Activated B cell treated with CpG ODN at 0.5 μM for 24 hours (primary cell): ENCODE measurements at regions of chr7 and their contacts with region 1.

Region 1: DNA sequence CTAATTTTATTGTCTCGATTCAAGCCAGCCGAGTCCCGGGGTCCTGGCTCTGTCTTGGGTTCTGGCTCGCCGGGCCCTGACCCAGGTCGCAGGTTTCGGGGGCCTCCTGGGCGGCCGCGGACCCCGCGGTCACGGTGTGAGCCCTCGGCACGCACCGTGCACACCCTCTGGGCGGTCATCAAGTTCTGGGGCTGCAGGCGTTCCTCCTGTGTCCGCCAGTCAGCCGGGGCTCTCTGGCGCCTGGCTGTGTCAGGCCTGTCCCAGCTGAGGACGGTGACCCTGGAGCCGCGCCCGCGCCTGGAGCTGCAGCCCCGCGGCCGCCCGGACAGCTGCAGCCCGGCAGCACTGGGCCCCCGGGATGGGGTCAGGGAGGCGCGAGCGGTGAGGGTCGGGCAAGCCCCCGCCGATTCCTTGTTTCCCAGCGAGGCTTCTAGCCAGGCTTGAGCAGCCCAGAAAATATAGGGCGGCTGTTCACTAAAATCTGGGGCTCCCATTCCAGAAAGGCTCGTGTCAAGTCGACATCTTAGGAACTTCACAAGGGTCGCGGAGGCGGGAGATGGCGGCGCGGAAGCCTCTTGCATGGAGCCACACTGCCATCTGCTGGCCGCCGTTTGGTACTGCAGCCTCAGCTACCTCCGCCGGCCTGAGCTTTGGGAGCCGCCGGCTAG is 4.2 kb upstream of the HOXA7 start:
- DNase-seq: peak; percentile 83
- ATAC-seq: peak; percentile 87
- H3K4me3 Mint-ChIP-seq: peak overlapping the region; percentile 75
- H3K27ac Mint-ChIP-seq: no peak overlapping the region
- H3K4me1 Mint-ChIP-seq: peaks cover 31% of the 10 kb centered on the region
- H3K27me3 Mint-ChIP-seq: peaks cover 72% of the 10 kb centered on the region
- CTCF ChIP-seq: peak; percentile 97

Region 2: DNA sequence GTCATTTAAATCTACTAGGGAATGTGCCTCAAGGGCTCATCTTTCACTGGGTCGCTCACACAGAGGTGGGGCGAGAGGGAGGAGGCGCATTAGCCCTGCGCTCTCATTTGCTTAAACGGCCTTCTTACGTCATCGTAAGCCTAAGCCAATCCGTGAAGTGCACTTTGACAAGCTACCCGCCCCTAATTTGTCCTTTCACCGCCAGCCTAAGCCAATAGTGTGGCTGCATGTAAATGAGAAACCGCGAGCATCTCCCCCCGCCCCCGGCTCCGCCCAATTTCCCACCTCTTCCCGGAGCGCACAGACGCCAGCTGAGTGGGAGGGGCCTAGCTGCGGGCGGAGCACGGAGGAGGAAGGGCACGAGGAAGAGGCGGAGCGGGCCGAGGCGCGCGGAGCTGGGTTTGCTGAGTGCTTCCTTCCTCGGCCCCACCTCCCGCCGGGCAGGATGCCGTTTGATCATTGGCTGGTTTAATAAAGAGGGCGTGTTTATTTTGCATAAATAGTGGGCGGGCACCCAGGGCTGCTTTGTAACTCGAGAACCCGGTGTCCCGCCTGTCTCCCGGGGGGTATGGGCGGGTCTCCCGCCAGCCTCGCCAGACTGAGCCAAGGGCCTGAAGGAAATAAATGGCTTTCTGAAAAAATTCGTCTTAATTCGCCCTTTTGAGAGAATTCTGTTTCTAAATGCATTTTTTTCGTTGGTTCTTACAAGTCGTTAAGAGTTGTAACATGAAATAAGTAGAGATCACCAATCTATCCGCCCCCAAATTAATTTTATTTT is 1298.2 kb before region 1 on chr7:
- CTCF ChIA-PET with region 1: interaction called, 5 read pairs
- POLR2A ChIA-PET with region 1: interaction called, 4 read pairs
- intact Hi-C with region 1: loop called (anchors 2 kb)
- DNase-seq: peak; percentile 49
- ATAC-seq: peak; percentile 89
- H3K4me3 Mint-ChIP-seq: peak overlapping the region; percentile 35
- H3K27ac Mint-ChIP-seq: peak overlapping the region; percentile 59
- H3K4me1 Mint-ChIP-seq: peaks cover 14% of the 10 kb centered on the region
- H3K27me3 Mint-ChIP-seq: peaks cover 63% of the 10 kb centered on the region
- CTCF ChIP-seq: no peak

Region 3: GRCh38 chr7:26200444-26201246 is 960.0 kb before region 1 on chr7 and contains the start of gene HNRNPA2B1:
- CTCF ChIA-PET with region 1: no interaction called
- POLR2A ChIA-PET with region 1: no interaction called
- intact Hi-C with region 1: loop called (anchors 5 kb)
- DNase-seq: peak; percentile 95
- ATAC-seq: peak; percentile 66
- H3K4me3 Mint-ChIP-seq: peak within 1 kb of the TSS; percentile 99
- H3K27ac Mint-ChIP-seq: peak within 1 kb of the TSS; percentile 100
- H3K4me1 Mint-ChIP-seq: peaks cover 55% of the 10 kb centered on the region
- H3K27me3 Mint-ChIP-seq: no peaks in the 10 kb centered on the region
- CTCF ChIP-seq: no peak
- total RNA-seq, gene HNRNPA2B1: 618 and 634 TPM in 2 replicates

Region 4: GRCh38 chr7:26376175-26376917 is 784.3 kb before region 1 on chr7:
- CTCF ChIA-PET with region 1: interaction called, 94 read pairs
- POLR2A ChIA-PET with region 1: no interaction called
- intact Hi-C with region 1: loop called (anchors 2 kb)
- DNase-seq: peak; percentile 47
- ATAC-seq: peak; percentile 46
- H3K4me3 Mint-ChIP-seq: peak overlapping the region; percentile 83
- H3K27ac Mint-ChIP-seq: no peak overlapping the region
- H3K4me1 Mint-ChIP-seq: peaks cover 4% of the 10 kb centered on the region
- H3K27me3 Mint-ChIP-seq: peaks cover 2% of the 10 kb centered on the region
- CTCF ChIP-seq: no peak

Region 5: DNA sequence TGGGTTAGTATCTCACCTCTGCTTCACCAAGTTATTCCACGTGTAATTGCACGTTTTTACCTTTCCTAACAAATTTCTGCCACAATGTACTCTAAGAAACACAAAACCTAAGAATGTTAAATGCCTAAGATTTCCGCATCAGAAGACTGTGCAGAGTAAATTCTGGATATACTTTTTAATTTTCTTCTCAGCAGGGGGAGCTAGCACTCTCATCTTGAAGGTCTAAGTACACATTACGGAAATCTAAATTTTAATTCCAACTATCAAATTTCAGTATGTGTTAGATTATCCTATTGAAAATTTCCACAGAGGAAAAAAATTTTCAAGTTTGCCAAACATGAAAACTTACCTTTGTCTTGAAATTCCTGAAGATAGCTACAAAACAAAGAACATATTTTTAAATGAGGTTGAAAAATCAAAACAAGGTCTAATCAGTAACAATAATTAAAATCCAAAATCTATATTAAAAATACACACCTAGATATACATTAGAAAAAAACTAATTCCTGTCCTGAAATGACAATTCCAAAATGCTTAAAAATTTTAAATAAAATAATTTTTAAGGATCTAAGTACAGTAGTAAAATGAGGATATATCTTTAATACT is 306.8 kb before region 1 on chr7:
- CTCF ChIA-PET with region 1: interaction called, 37 read pairs
- POLR2A ChIA-PET with region 1: no interaction called
- intact Hi-C with region 1: loop called (anchors 1 kb)
- DNase-seq: no peak
- ATAC-seq: no peak
- H3K4me3 Mint-ChIP-seq: no peak overlapping the region
- H3K27ac Mint-ChIP-seq: no peak overlapping the region
- H3K4me1 Mint-ChIP-seq: peaks cover 30% of the 10 kb centered on the region
- H3K27me3 Mint-ChIP-seq: no peaks in the 10 kb centered on the region
- CTCF ChIP-seq: no peak

Region 6: GRCh38 chr7:27134392-27134791 is 26.3 kb before region 1 on chr7:
- CTCF ChIA-PET with region 1: no interaction called
- POLR2A ChIA-PET with region 1: no interaction called
- intact Hi-C with region 1: no loop called
- DNase-seq: no peak
- ATAC-seq: no peak
- H3K4me3 Mint-ChIP-seq: no peak overlapping the region
- H3K27ac Mint-ChIP-seq: no peak overlapping the region
- H3K4me1 Mint-ChIP-seq: peaks cover 2% of the 10 kb centered on the region
- H3K27me3 Mint-ChIP-seq: peaks cover 47% of the 10 kb centered on the region
- CTCF ChIP-seq: no peak

Region 7: DNA sequence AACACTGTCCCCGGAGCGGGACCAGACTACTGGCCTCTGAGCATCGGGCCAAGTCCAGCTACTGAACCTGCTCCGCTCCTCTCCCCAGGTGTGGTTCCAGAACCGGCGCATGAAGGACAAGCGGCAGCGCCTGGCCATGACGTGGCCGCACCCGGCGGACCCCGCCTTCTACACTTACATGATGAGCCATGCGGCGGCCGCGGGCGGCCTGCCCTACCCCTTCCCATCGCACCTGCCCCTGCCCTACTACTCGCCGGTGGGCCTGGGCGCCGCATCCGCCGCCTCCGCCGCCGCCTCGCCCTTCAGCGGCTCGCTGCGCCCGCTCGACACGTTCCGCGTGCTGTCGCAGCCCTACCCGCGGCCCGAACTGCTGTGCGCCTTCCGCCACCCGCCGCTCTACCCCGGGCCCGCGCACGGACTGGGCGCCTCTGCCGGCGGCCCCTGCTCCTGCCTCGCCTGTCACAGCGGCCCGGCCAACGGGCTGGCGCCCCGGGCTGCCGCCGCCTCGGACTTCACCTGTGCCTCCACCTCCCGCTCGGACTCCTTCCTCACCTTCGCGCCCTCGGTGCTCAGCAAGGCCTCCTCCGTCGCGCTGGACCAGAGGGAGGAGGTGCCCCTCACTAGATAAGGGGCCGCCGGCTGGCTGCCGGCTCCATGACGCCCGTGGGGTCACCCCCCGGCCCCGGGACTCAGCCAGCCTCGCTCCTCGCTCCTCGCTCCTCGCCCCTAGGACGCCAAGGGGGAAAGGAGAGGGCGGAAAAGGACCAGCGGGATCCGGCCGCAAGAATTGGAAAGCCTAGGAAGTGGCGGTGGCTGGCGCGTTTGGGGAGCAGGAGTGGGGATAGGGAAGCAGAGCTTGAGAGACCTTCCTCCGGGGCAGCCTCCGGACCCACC is 85.4 kb after region 1 on chr7:
- CTCF ChIA-PET with region 1: interaction called, 3 read pairs
- POLR2A ChIA-PET with region 1: no interaction called
- intact Hi-C with region 1: loop called (anchors 2 kb)
- DNase-seq: no peak
- ATAC-seq: no peak
- H3K4me3 Mint-ChIP-seq: no peak overlapping the region
- H3K27ac Mint-ChIP-seq: no peak overlapping the region
- H3K4me1 Mint-ChIP-seq: peaks cover 36% of the 10 kb centered on the region
- H3K27me3 Mint-ChIP-seq: peaks cover 76% of the 10 kb centered on the region
- CTCF ChIP-seq: no peak

Region 8: GRCh38 chr7:27346531-27347270 is 186.0 kb after region 1 on chr7:
- CTCF ChIA-PET with region 1: no interaction called
- POLR2A ChIA-PET with region 1: no interaction called
- intact Hi-C with region 1: no loop called
- DNase-seq: no peak
- ATAC-seq: no peak
- H3K4me3 Mint-ChIP-seq: no peak overlapping the region
- H3K27ac Mint-ChIP-seq: no peak overlapping the region
- H3K4me1 Mint-ChIP-seq: no peaks in the 10 kb centered on the region
- H3K27me3 Mint-ChIP-seq: peaks cover 24% of the 10 kb centered on the region
- CTCF ChIP-seq: no peak